K562 (cell line): ENCODE measurements at regions of chr19 and their contacts with region 1.

Region 1: GRCh38 chr19:4518345-4519171 is at the start of gene PLIN4:
- DNase-seq: no peak
- ATAC-seq: peak; percentile 63
- H3K4me3 ChIP-seq: no peak within 1 kb of the TSS
- H3K27ac ChIP-seq: no peak within 1 kb of the TSS
- H3K4me1 ChIP-seq: peaks cover 0 to 30% of the 10 kb centered on the region in 2 experiments; a peak in 2 of 5 replicates
- H3K27me3 ChIP-seq: peaks cover 4 to 16% of the 10 kb centered on the region in 2 experiments; a peak in 3 of 5 replicates
- CTCF ChIP-seq: no peak
- EP300 ChIP-seq: no peak
- POLR2A ChIP-seq: no peak
- RAD21 ChIP-seq: no peak
- polyA plus RNA-seq, gene PLIN4: not detected

Region 2: DNA sequence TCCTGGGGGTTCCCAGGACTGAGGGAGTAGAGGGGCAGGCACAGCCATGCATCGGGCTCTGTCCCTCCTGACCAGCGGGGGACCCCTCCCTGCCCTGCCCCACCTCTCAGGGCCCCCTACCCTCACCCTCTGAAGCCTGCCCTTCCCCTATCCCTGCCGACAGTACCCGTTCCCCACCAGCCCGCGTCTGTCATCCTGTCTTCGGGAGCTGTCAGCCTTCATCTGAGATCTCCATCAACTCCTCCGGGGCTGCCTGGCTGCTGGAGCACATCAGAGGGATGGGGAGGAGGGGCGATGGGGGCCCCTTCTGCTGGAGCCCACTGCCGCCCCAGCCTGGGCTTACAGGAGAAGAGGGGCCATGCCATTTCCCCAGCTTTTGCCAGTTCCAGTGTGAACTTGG is 245.7 kb before region 1 on chr19:
- CTCF ChIA-PET with region 1: interaction called, 6 read pairs
- POLR2A ChIA-PET with region 1: no interaction called
- in situ Hi-C with region 1: loop called (anchors 5 kb)
- intact Hi-C with region 1: no loop called
- DNase-seq: no peak
- ATAC-seq: no peak
- H3K4me3 ChIP-seq: no peak overlapping the region
- H3K27ac ChIP-seq: no peak overlapping the region
- H3K4me1 ChIP-seq: peaks cover 0 to 10% of the 10 kb centered on the region in 2 experiments; a peak in 3 of 5 replicates
- H3K27me3 ChIP-seq: no peaks in the 10 kb centered on the region
- CTCF ChIP-seq: no peak
- EP300 ChIP-seq: no peak
- POLR2A ChIP-seq: no peak
- RAD21 ChIP-seq: no peak

Region 3: DNA sequence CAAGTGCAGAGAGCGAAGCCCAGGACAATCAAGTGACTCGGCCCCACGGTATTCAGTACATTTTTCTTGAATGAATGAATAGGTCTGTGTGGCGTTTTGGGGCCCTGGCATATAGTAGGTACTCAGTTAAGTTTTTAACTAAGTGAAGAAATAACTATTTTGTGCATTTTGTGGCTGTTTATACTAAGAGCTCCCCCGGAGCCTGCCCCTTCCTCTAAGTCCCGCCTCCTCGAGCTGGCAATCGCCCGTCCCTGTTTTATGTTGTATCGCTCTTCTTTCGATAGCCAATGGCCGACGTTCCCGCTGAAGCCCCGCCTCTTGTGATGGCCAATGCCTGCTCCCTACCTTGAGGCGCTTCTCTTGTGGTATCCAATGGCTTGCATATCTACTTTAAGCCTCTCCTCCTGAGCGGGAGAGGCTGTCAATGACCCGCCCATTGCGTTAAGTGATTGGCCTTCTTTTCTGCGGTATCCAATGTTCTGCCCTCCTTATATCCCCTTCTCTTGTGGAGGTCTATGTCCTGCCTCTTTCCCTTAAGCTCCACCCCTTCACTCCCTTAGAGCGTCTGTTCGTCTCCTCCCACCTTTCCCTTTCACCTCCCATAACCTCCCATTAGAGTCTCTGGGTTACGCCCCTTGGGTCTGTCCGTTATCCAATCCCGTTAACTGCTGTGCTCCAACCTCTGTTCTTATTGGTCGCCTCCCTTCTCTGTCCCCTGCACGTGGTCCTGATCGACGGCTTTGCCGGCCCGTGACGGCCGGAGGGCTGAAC is 47.0 kb before region 1 on chr19:
- CTCF ChIA-PET with region 1: no interaction called
- POLR2A ChIA-PET with region 1: no interaction called
- in situ Hi-C with region 1: no loop called
- intact Hi-C with region 1: no loop called
- DNase-seq: peak; percentile 95 to 99 (median 98)
- ATAC-seq: peak; percentile 94
- H3K4me3 ChIP-seq: peak overlapping the region; percentile 94
- H3K27ac ChIP-seq: peak overlapping the region; percentile 98
- H3K4me1 ChIP-seq: peaks cover 3 to 32% of the 10 kb centered on the region in 2 experiments; a peak in 4 of 5 replicates
- H3K27me3 ChIP-seq: no peaks in the 10 kb centered on the region
- CTCF ChIP-seq: no peak
- EP300 ChIP-seq: no peak
- POLR2A ChIP-seq: peak; percentile 85
- RAD21 ChIP-seq: no peak

Region 4: GRCh38 chr19:4557971-4558941 is 39.7 kb after region 1 on chr19:
- CTCF ChIA-PET with region 1: no interaction called
- POLR2A ChIA-PET with region 1: no interaction called
- in situ Hi-C with region 1: no loop called
- intact Hi-C with region 1: no loop called
- DNase-seq: peak in 2 of 4 experiments; percentile 52 to 63
- ATAC-seq: no peak
- H3K4me3 ChIP-seq: 0 out of 2 replicates have a peak overlapping the region, but pooled peaks have one; percentile 8
- H3K27ac ChIP-seq: no peak overlapping the region
- H3K4me1 ChIP-seq: peaks cover 11 to 43% of the 10 kb centered on the region in 2 experiments
- H3K27me3 ChIP-seq: no peaks in the 10 kb centered on the region
- CTCF ChIP-seq: peak; percentile 84 to 93 (median 92)
- EP300 ChIP-seq: no peak
- POLR2A ChIP-seq: no peak
- RAD21 ChIP-seq: peak; percentile 34 to 51